WTC11 (cell line): ENCODE measurements at regions of chr2 and their contacts with region 1.

Region 1: DNA sequence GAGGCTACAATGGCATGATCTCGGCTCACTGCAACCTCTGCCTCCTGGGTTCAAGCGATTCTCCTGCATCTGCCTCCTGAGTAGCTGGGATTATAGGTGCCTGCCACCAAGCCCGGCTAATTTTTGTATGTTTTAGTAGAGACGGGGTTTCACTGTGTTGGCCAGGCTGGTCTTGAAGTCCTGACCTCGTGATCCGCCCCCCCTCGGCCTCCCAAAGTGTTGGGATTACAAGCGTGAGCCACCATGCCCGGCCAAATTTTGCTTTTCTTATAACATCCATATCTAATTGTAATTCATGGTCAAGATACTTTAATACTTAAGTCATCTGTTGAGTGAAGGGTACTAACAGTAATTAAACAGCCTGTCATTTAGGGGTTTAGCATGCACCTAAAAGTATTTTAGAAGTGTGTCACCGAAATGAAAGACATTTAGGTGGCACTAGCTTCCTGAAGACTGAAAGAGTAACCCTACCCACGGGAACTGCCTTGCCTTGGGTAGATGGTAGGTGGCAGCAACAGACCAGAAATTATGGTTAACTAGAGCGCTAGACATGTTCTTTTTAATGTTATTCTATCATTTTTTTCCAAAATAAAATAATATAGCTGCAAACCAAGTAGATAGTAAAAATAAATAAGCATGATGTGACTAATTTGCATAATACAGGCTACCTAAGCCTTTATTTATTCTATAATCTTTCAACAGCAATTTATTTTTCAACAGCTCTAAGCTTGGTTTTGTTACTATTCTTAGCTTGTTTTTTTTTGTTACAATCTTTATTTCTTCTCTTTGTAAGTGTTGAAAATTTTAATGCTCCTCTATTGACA is 8.6 kb upstream of the ACYP2 start:
- DNase-seq: no peak
- ATAC-seq: peak; percentile 45
- H3K4me3 Mint-ChIP-seq: no peak overlapping the region
- H3K27ac Mint-ChIP-seq: peak overlapping the region; percentile 32; the same call in 1 of the 2 replicates
- H3K4me1 Mint-ChIP-seq: peaks cover 8% of the 10 kb centered on the region
- H3K27me3 Mint-ChIP-seq: no peaks in the 10 kb centered on the region
- CTCF ChIP-seq: peak; percentile 31; the same call in 1 of the 2 replicates

Region 2: DNA sequence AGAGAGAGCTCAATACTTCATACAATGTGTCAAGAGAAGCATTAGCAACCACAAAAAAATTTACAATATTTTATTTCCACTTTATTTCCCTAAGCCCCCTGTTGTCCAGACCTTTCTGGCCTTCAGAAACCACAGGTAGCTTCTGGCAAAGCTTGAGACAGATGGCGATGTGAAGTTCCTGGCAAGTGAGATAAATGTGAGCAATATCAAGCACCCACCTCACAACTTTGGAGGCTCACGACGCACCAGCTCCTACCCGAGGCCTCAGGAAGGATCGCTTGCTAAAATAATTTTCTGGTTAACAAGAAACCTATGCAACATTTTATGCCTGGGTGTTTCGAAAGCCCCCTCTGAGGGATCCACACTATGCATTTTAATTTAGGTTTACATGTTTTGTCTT is 497.3 kb before region 1 on chr2:
- CTCF ChIA-PET with region 1: no interaction called
- POLR2A ChIA-PET with region 1: no interaction called
- DNase-seq: no peak
- ATAC-seq: no peak
- H3K4me3 Mint-ChIP-seq: no peak overlapping the region
- H3K27ac Mint-ChIP-seq: no peak overlapping the region
- H3K4me1 Mint-ChIP-seq: no peaks in the 10 kb centered on the region; the same call in 1 of the 2 replicates
- H3K27me3 Mint-ChIP-seq: no peaks in the 10 kb centered on the region
- CTCF ChIP-seq: no peak

Region 3: GRCh38 chr2:54052825-54053718 is 53.8 kb before region 1 on chr2:
- CTCF ChIA-PET with region 1: interaction called, 13 read pairs
- POLR2A ChIA-PET with region 1: no interaction called
- DNase-seq: no peak
- ATAC-seq: peak; percentile 91
- H3K4me3 Mint-ChIP-seq: no peak overlapping the region
- H3K27ac Mint-ChIP-seq: no peak overlapping the region
- H3K4me1 Mint-ChIP-seq: no peaks in the 10 kb centered on the region; the same call in 1 of the 2 replicates
- H3K27me3 Mint-ChIP-seq: no peaks in the 10 kb centered on the region
- CTCF ChIP-seq: no peak

Region 4: GRCh38 chr2:54503192-54503591 is 396.3 kb after region 1 on chr2:
- CTCF ChIA-PET with region 1: interaction called, 14 read pairs
- POLR2A ChIA-PET with region 1: no interaction called
- DNase-seq: peak; percentile 79
- ATAC-seq: peak; percentile 96
- H3K4me3 Mint-ChIP-seq: no peak overlapping the region
- H3K27ac Mint-ChIP-seq: peak overlapping the region; percentile 10; the same call in 1 of the 2 replicates
- H3K4me1 Mint-ChIP-seq: peaks cover 53% of the 10 kb centered on the region
- H3K27me3 Mint-ChIP-seq: no peaks in the 10 kb centered on the region
- CTCF ChIP-seq: peak; percentile 70

Region 5: GRCh38 chr2:54691445-54692135 is 584.7 kb after region 1 on chr2:
- CTCF ChIA-PET with region 1: interaction called, 10 read pairs
- POLR2A ChIA-PET with region 1: no interaction called
- DNase-seq: no peak
- ATAC-seq: no peak
- H3K4me3 Mint-ChIP-seq: no peak overlapping the region
- H3K27ac Mint-ChIP-seq: no peak overlapping the region
- H3K4me1 Mint-ChIP-seq: no peaks in the 10 kb centered on the region
- H3K27me3 Mint-ChIP-seq: no peaks in the 10 kb centered on the region
- CTCF ChIP-seq: no peak

Region 6: GRCh38 chr2:54838585-54839035 is 731.8 kb after region 1 on chr2:
- CTCF ChIA-PET with region 1: interaction called, 11 read pairs
- POLR2A ChIA-PET with region 1: no interaction called
- DNase-seq: peak; percentile 62
- ATAC-seq: peak; percentile 87
- H3K4me3 Mint-ChIP-seq: no peak overlapping the region
- H3K27ac Mint-ChIP-seq: no peak overlapping the region
- H3K4me1 Mint-ChIP-seq: no peaks in the 10 kb centered on the region
- H3K27me3 Mint-ChIP-seq: no peaks in the 10 kb centered on the region
- CTCF ChIP-seq: peak; percentile 76